ENCODE measurements at regions of chr4 and their contacts with region 1.

Region 1: DNA sequence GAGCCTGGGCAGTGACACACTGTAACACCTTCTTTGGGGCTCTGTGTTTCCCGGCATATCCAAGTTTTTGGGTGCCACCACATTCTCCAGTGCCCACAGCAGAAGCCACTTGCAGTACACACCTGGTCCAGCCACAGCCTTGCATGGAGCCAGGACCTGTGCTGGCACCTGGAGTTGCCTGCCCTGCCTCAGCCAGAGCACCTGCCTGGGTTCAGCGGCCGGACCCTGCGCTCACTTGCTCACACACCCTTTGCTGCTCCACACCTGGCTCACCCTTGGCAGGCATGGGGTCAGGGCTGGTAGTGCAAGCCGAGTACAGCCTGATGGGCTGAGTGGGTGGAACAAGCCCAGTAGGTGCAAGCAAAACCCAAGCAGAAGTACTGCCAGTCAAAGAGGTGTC is 1511.1 kb downstream of the TECRL start:
- DNase-seq: no peak
- ATAC-seq: no peak

Region 2: GRCh38 chr4:61128682-61129081 is 1769.4 kb before region 1 on chr4:
- intact Hi-C with region 1: loop called (anchors 5 kb)
- DNase-seq: no peak
- ATAC-seq: no peak

Measured in sciatic nerve (tissue), 2 donors.